Cardiac septum (tissue), 1 donor: ENCODE measurements at regions of chr14 and their contacts with region 1.

Region 1: GRCh38 chr14:88824314-88825077 is at the start of gene TTC8:
- DNase-seq: peak; percentile 94
- total RNA-seq, gene TTC8: 12.2 TPM

Region 2: GRCh38 chr14:88682495-88683114 is 141.9 kb before region 1 on chr14:
- intact Hi-C with region 1: no loop called
- DNase-seq: no peak

Region 3: DNA sequence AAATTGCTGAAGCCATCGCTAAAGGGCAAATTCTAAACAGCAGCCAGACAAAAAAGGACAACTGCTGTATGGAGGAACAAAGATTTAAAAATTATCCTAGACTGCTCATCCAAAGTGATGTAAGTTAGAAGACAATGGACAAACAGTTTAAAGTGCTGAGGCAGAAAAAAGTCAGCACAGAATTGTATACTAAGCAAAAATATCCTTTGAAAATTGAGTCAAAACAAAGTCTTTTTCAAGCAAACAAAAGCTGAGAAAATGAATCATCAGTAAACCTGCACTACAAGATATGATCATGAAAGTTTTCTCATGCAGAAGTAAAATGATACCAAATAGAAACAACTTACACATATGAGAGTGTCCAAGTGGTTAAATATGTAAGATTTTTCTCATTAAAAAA is 75.4 kb before region 1 on chr14:
- intact Hi-C with region 1: no loop called
- DNase-seq: no peak

Region 4: GRCh38 chr14:88792572-88793258 is 31.8 kb before region 1 on chr14 and contains the start of gene EML5:
- intact Hi-C with region 1: loop called (anchors 2 kb)
- DNase-seq: peak; percentile 86
- total RNA-seq, gene EML5: 0.24 TPM